Panc1 (cell line): ENCODE measurements at regions of chr21 and their contacts with region 1.

Region 1: GRCh38 chr21:33854604-33855003 is 61.0 kb downstream of the ATP5PO start:
- DNase-seq: peak; percentile 7
- ATAC-seq: peak; percentile 73
- H3K4me3 ChIP-seq: no peak overlapping the region
- H3K27ac ChIP-seq: peak overlapping the region; percentile 71
- H3K4me1 ChIP-seq: peaks cover 14% of the 10 kb centered on the region
- H3K27me3 ChIP-seq: no peaks in the 10 kb centered on the region
- CTCF ChIP-seq: no peak

Region 2: DNA sequence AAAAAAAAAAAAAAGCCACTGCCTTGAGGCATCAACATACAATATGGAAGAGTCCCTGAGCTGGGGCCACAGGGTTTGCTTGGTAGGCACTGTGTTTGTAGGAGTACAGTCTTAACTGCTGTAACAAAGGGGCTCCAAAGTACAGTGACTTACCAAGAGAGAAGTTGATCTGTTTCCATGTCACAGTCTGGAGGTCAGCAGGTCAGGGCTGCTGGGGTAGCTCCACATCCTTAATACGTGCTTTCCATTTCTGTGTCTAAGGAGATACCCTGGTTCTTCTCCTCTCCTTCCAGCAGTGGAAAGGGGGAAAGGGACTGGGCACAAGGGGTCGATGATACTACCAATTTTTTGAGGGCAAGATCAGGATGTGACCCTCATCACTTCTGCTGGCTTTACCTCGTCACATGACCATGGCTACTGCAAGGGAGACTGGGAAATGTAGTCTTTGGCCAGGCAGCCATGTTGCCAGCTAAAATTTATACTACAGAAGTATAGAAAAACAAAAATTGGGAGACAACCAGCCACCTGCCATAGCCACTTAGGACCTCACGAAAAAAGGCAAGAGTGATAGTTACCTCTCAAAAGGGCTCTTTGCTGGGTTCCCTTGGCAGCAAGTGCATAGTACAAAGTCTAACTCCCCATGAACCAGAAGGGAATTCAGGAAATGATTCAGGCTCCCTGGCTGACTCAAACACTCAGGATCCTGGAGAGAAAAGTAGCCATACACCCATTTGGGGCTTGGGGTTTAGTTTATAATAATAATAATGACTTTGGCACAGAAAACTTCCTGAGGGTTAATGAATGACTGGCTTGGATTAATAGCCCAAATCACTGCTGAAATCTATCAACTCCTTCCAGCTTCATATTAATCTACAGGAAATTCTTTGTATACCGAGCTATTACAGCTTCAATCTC is 113.7 kb after region 1 on chr21:
- CTCF ChIA-PET with region 1: no interaction called
- POLR2A ChIA-PET with region 1: interaction called, 14 read pairs
- in situ Hi-C with region 1: no loop called
- intact Hi-C with region 1: no loop called
- DNase-seq: no peak
- ATAC-seq: no peak
- H3K4me3 ChIP-seq: no peak overlapping the region
- H3K27ac ChIP-seq: peak overlapping the region; percentile 23; the same call in 1 of the 2 replicates
- H3K4me1 ChIP-seq: peaks cover 34% of the 10 kb centered on the region
- H3K27me3 ChIP-seq: no peaks in the 10 kb centered on the region
- CTCF ChIP-seq: no peak